ENCODE measurements at regions of chr2 and their contacts with region 1.

Region 1: GRCh38 chr2:180991820-180992219 is 11.4 kb downstream of the UBE2E3 start:
- DNase-seq: no peak
- ATAC-seq: peak; percentile 82
- H3K4me3 ChIP-seq: no peak overlapping the region
- H3K27ac ChIP-seq: peak overlapping the region; percentile 47
- H3K4me1 ChIP-seq: peaks cover 12% of the 10 kb centered on the region
- H3K27me3 ChIP-seq: no peaks in the 10 kb centered on the region
- CTCF ChIP-seq: no peak
- EP300 ChIP-seq: no peak
- POLR2A ChIP-seq: no peak
- RAD21 ChIP-seq: no peak

Region 2: DNA sequence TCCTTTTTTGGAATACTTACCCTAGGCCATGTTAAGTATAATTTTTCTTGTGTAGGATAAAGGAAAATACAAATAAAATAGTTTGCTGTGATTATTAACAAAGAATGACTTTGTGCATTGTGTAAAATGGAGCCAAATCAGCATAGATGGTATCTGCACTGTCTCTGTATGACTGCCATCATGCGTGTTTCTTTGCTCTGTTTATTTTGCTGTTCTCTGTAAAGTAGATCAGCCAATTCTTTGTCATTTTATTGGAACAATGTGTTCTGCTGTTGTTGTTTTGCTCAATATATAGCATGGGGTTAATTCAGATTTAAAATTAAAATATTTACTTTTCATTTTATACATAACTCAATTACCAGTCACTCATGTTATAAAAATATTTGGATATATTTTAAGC is 192.7 kb before region 1 on chr2:
- CTCF ChIA-PET with region 1: no interaction called
- POLR2A ChIA-PET with region 1: no interaction called
- RAD21 ChIA-PET with region 1: no interaction called
- SMC1A ChIA-PET with region 1: no interaction called
- in situ Hi-C with region 1: no loop called
- intact Hi-C with region 1: no loop called
- DNase-seq: no peak
- ATAC-seq: no peak
- H3K4me3 ChIP-seq: no peak overlapping the region
- H3K27ac ChIP-seq: no peak overlapping the region
- H3K4me1 ChIP-seq: no peaks in the 10 kb centered on the region
- H3K27me3 ChIP-seq: no peaks in the 10 kb centered on the region
- CTCF ChIP-seq: no peak
- EP300 ChIP-seq: no peak
- POLR2A ChIP-seq: no peak
- RAD21 ChIP-seq: no peak

Region 3: DNA sequence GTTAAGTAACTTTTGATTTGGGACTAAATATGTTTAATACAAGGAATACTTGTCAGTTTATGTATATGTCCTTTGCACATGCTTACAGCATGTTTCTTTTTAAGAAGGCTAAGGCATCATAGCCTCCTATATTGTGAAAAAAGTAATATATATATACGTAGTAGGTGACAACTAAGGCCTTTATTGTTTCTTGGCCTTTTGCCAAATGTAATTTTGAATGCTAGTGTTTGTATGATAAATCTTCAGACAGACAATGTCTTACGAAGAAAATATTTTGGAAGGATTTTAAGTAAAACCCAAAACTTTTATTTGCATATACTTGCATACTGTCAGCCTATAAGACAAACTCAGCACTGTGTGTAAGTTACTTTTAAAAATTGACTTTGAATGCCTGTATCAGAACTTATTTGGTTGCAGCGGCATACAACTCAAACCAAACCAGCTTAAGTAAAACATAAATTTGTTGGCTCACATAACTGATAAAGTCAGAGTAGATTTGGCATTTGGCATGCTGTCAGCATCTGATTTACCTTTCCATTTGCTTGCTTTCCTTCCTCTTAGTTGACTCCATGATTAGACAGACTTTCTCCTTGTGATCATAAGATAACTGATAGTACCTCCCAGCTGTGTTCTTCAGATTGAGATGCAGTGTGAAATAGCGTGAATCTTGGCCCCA is 13.0 kb after region 1 on chr2:
- CTCF ChIA-PET with region 1: interaction called, 7 read pairs
- POLR2A ChIA-PET with region 1: no interaction called
- RAD21 ChIA-PET with region 1: interaction called, 5 read pairs
- SMC1A ChIA-PET with region 1: interaction called, 12 read pairs
- in situ Hi-C with region 1: no loop called
- intact Hi-C with region 1: no loop called
- DNase-seq: no peak
- ATAC-seq: no peak
- H3K4me3 ChIP-seq: no peak overlapping the region
- H3K27ac ChIP-seq: no peak overlapping the region
- H3K4me1 ChIP-seq: no peaks in the 10 kb centered on the region
- H3K27me3 ChIP-seq: no peaks in the 10 kb centered on the region
- CTCF ChIP-seq: no peak
- EP300 ChIP-seq: no peak
- POLR2A ChIP-seq: no peak
- RAD21 ChIP-seq: no peak

Region 4: DNA sequence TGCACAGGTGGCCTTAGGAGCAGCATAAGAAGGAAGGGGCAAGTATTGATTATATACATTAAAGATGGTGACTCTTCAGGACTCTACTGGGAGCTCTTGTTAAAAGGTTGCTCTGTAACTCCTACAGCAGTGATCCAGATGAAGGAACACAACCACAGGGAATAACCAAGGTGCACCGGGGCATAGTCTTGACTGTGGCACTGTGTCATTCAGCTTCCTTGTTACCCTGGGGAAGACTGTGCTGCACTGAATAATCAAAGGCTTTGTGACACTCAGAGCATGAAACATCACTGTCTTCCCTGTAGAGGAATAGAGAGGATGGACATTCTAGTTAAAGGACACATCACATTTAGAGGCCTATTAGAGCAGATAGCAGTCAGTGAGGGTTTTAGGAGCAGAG is 93.9 kb after region 1 on chr2:
- CTCF ChIA-PET with region 1: no interaction called
- POLR2A ChIA-PET with region 1: no interaction called
- RAD21 ChIA-PET with region 1: no interaction called
- SMC1A ChIA-PET with region 1: no interaction called
- in situ Hi-C with region 1: no loop called
- intact Hi-C with region 1: no loop called
- DNase-seq: no peak
- ATAC-seq: no peak
- H3K4me3 ChIP-seq: no peak overlapping the region
- H3K27ac ChIP-seq: no peak overlapping the region
- H3K4me1 ChIP-seq: no peaks in the 10 kb centered on the region
- H3K27me3 ChIP-seq: no peaks in the 10 kb centered on the region
- CTCF ChIP-seq: no peak
- EP300 ChIP-seq: no peak
- POLR2A ChIP-seq: no peak
- RAD21 ChIP-seq: no peak

Measured in GM12878 (cell line).